ENCODE measurements at regions of chr19 and their contacts with region 1.

Region 1: DNA sequence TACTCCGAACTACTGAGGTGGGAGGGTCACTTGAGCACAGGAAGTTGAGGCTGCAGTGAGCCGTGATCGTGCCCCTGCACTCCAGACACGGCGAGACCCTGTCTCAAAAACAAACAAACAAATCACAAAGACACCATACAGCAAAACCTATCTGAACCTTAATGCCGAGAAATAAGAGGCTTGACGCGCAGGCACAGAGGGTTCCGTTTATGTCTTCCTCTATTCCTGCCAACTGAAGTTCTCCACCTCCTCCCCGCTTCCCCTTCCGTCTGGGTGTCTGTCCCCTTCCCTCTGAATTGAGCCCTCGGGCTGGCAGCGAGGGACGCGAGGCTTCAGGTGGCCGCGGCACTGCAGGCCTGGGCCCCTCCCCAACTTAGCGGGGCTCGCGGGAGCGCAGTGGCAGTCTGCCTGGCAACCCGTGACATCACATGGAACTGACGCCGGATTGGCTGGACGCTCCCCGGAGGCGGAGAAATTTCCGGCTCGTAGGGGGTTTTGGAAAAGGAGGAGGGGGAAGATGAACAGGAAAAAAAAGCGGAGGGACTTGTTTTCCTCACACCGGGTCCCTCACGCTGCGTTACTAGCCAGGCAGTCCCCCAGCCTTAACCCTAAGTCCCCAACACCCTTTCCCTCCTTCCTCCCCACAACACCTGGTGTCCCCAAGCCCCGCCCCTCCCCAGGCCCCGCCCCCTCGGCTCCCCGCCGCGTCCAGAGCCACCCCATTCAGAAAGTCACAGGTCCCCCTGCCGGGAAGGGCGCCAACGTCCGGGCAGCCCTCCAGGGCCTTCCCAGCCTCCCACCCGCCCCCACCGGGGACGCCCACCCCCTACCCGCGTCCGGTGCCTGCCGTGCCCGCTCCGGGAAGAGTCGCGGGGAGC is 1.1 kb upstream of the MYBPC2 start:
- DNase-seq: peak; percentile 86
- H3K4me3 ChIP-seq: peak overlapping the region in 2 of 3 experiments; percentile 39 to 51
- H3K27ac ChIP-seq: no peak overlapping the region
- H3K4me1 ChIP-seq: peaks cover 6% of the 10 kb centered on the region
- H3K27me3 ChIP-seq: peaks cover 4 to 13% of the 10 kb centered on the region in 2 experiments
- CTCF ChIP-seq: no peak
- POLR2A ChIP-seq: no peak

Region 2: GRCh38 chr19:50376166-50377050 is 55.2 kb before region 1 on chr19 and contains the start of gene NR1H2:
- CTCF ChIA-PET with region 1: no interaction called
- POLR2A ChIA-PET with region 1: no interaction called
- dilution Hi-C with region 1: no loop called
- intact Hi-C with region 1: loop called (anchors 2 kb)
- DNase-seq: peak; percentile 96
- H3K4me3 ChIP-seq: peak within 1 kb of the TSS; percentile 69 to 83 (median 77)
- H3K27ac ChIP-seq: peak within 1 kb of the TSS; percentile 94
- H3K4me1 ChIP-seq: peaks cover 13% of the 10 kb centered on the region
- H3K27me3 ChIP-seq: no peaks in the 10 kb centered on the region
- CTCF ChIP-seq: no peak
- POLR2A ChIP-seq: peak; percentile 64
- total RNA-seq, gene NR1H2: 46.7 and 50.6 TPM in 2 replicates

Region 3: GRCh38 chr19:50383852-50384684 is 47.5 kb before region 1 on chr19 and contains the start of gene POLD1:
- CTCF ChIA-PET with region 1: no interaction called
- POLR2A ChIA-PET with region 1: no interaction called
- dilution Hi-C with region 1: no loop called
- intact Hi-C with region 1: loop called (anchors 1 kb)
- DNase-seq: peak; percentile 99
- H3K4me3 ChIP-seq: peak within 1 kb of the TSS; percentile 71 to 94 (median 80)
- H3K27ac ChIP-seq: peak within 1 kb of the TSS; percentile 63
- H3K4me1 ChIP-seq: peaks cover 16% of the 10 kb centered on the region
- H3K27me3 ChIP-seq: no peaks in the 10 kb centered on the region
- CTCF ChIP-seq: no peak
- POLR2A ChIP-seq: peak; percentile 79
- total RNA-seq, gene POLD1: 63.9 and 73.8 TPM in 2 replicates

Region 4: GRCh38 chr19:50402544-50403301 is 28.9 kb before region 1 on chr19:
- CTCF ChIA-PET with region 1: no interaction called
- POLR2A ChIA-PET with region 1: no interaction called
- dilution Hi-C with region 1: no loop called
- intact Hi-C with region 1: no loop called
- DNase-seq: no peak
- H3K4me3 ChIP-seq: no peak overlapping the region
- H3K27ac ChIP-seq: no peak overlapping the region
- H3K4me1 ChIP-seq: no peaks in the 10 kb centered on the region
- H3K27me3 ChIP-seq: no peaks in the 10 kb centered on the region
- CTCF ChIP-seq: no peak
- POLR2A ChIP-seq: no peak